ENCODE measurements at regions of chr3 and their contacts with region 1.

Region 1: DNA sequence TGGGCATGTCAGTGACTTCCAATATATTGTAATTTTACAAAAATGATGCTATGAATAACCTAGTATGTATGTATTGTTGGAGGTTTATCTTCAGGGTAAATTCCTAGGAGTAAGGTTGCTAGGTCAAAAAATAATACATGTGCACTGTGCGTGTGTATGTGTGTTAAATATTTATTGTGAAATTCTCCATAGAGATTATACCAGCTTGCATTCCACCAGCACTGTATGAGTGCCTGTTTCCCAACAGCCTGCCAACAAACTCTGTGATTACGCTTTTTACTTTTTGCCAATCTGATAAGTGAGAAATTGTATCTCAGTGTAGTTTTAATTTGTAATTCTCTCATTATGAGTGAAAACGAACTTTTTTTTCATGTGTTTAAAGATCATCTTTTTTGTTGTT is 12.6 kb upstream of the IGF2BP2 start:
- DNase-seq: no peak
- H3K4me3 ChIP-seq: no peak overlapping the region
- H3K27ac ChIP-seq: no peak overlapping the region
- H3K27me3 ChIP-seq: no peaks in the 10 kb centered on the region
- CTCF ChIP-seq: no peak

Region 2: DNA sequence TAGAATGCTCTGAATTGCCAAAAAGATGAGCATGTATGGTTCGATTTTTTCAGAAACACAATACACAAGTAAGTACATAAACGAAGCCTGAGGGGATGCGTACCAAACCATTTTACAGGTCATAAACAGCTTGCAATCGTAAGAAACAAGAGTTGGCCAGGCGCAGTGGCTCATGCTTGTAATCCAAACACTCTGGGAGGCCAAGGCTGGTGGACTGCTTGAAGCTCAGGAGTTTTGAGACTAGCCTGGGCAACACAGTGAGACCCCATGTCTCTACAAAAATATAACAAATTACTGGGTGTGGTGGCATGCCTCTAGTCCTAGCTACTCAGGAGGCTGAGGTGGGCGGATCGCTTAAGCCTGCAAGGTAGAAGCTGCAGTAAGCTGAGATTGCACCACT is 87.0 kb after region 1 on chr3:
- CTCF ChIA-PET with region 1: no interaction called
- POLR2A ChIA-PET with region 1: interaction called, 11 read pairs
- DNase-seq: no peak
- H3K4me3 ChIP-seq: no peak overlapping the region
- H3K27ac ChIP-seq: no peak overlapping the region
- H3K27me3 ChIP-seq: no peaks in the 10 kb centered on the region
- CTCF ChIP-seq: no peak

Measured in AG04450 (cell line).